Esophagus squamous epithelium (tissue), 5 donors: ENCODE measurements at regions of chr14 and their contacts with region 1.

Region 1: DNA sequence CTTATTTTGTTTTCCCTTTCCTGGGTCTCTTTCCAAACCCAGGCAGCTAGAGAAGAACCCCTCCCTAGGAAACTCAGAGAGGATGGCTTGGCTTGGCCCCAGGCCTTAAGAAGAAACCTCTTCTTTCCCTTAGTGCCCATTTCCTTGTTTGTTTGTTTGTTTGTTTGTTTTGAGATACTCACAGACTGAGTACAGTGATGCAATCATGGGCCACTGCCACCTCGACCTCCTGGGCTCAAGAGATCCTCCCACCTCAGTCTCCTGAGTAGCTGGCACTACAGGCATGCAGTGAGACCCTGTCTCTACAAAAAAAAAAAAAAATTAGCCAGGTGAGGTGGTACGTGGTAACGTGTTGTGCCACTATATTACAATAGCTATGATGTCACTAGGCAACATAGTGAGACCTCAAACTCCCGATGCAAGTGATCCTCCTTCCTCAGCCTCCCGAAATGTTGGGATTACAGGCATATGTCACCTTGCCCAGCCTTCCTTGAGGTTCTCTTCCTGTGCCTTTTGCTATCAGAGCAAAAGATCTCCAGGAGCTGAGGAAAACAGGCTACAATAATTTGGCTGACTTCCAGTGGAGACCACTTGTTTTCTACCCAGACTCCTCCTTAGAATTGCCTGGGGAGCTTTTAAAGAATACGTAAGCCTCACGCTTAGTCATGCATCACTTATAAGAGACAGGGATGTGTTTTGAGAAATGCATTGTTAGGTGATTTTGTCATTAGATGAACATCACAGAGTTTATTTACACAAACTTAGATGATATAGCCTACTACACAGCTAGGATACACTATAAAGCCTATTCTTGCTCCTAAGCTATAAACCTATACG is 34.5 kb upstream of the LGALS3 start:
- DNase-seq: no peak
- H3K4me3 ChIP-seq: no peak overlapping the region
- H3K27ac ChIP-seq: no peak overlapping the region
- H3K4me1 ChIP-seq: peaks cover 0 to 46% (median 16%) of the 10 kb centered on the region in 3 donors
- H3K27me3 ChIP-seq: no peaks in the 10 kb centered on the region
- CTCF ChIP-seq: no peak
- POLR2A ChIP-seq: no peak

Region 2: DNA sequence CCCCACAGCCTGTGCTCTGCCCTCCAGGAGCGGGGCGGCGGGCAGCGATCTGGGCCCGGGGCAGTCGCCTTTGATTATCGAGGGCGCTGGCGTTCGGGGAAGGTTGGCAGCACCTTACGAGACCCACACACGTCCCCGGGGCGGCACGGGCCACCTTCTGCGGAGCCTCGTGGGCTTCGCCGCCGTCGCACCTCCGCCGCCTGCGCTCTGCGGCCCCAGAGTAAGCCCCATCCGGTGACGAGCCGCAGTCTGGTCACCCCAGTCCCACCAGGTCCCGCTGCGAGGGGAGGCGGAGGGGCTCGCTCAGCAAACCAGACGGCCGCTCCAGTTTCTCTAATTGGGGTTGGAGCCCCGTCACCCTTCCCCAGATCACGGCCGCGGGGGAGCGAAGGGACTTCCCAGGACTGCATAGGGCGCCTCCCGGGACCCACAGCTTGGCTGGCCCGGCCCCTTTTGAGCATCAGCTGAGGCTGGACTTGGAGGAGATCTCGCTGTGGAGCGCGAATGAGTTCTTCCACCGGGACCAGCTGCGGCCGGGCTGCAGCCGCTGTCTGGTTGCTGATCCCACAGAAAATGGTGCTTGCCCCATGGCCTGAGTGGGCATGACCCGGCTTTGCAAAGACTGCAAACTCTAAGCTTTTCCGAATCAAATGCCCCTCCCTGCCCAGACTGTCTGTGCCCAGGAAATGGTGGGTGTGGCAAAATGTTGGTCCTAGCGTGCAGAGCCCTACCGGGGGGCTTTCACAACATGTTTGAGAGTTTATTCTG is 35.1 kb after region 1 on chr14:
- intact Hi-C with region 1: loop called (anchors 5 kb)
- DNase-seq: no peak
- H3K4me3 ChIP-seq: peak overlapping the region; percentile 89 to 93 (median 90)
- H3K27ac ChIP-seq: peak overlapping the region; percentile 98 to 99 (median 99)
- H3K4me1 ChIP-seq: peaks cover 17 to 90% (median 68%) of the 10 kb centered on the region in 3 donors
- H3K27me3 ChIP-seq: no peaks in the 10 kb centered on the region
- CTCF ChIP-seq: no peak
- POLR2A ChIP-seq: peak in 3 of 4 donors; percentile 1 to 20 (median 5)

Region 3: GRCh38 chr14:55160989-55161388 is 66.5 kb after region 1 on chr14:
- intact Hi-C with region 1: loop called (anchors 5 kb)
- DNase-seq: no peak
- H3K4me3 ChIP-seq: no peak overlapping the region
- H3K27ac ChIP-seq: no peak overlapping the region
- H3K4me1 ChIP-seq: no peaks in the 10 kb centered on the region
- H3K27me3 ChIP-seq: no peaks in the 10 kb centered on the region
- CTCF ChIP-seq: peak; percentile 49 to 77 (median 70)
- POLR2A ChIP-seq: no peak